Posterior vena cava (tissue), 2 donors: ENCODE measurements at regions of chr12 and their contacts with region 1.

Region 1: DNA sequence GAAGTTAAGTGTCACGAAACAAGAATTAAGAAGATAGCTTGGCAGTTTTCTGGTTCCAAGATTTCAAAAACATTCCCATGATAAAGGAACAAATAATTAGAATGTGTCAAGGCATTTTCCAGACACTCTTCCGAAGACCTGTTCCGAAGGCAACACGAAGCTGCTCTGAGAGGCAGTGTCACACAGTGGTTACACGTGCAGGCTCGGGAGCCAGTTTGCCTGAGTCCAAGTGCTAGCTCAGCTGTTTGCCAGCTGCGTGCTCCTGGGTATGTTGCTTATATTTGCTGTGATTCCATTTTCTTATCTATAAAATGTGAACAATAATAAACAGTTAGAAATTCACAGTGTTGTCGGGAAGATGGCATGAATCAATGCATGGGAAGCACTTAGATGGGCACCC is 217.9 kb upstream of the GRIP1 start:
- DNase-seq: no peak

Region 2: GRCh38 chr12:66786531-66787308 is 110.1 kb before region 1 on chr12:
- intact Hi-C with region 1: no loop called
- DNase-seq: no peak

Region 3: DNA sequence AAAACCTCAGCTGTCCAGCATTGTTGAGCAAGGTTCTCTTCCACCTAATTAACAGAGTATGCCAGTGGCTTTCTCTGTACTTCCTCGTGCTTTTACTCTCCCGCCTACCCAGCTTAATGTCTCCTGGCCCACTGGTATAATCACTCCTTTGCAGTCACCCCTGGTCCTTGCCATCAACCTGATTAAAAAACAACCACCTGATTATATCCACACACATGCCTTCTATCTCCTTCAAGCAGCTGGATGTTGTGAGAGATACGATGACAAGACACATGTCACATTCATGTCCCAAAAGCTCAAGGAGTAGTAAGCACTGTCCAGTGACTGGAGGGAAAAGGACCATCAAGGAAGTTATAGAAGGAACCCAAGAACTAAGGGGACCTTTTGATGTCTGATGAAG is 23.4 kb after region 1 on chr12:
- intact Hi-C with region 1: loop called in 1 of 2 experiments (anchors 1 kb)
- DNase-seq: no peak